MCF 10A (cell line): ENCODE measurements at regions of chr11 and their contacts with region 1.

Region 1: GRCh38 chr11:31870609-31871309 is 59.6 kb upstream of the PAX6 start:
- DNase-seq: peak; percentile 66
- H3K4me3 Mint-ChIP-seq: no peak overlapping the region
- H3K27ac Mint-ChIP-seq: no peak overlapping the region
- H3K4me1 Mint-ChIP-seq: no peaks in the 10 kb centered on the region
- H3K27me3 Mint-ChIP-seq: peaks cover 11% of the 10 kb centered on the region
- CTCF ChIP-seq: peak; percentile 68

Region 2: DNA sequence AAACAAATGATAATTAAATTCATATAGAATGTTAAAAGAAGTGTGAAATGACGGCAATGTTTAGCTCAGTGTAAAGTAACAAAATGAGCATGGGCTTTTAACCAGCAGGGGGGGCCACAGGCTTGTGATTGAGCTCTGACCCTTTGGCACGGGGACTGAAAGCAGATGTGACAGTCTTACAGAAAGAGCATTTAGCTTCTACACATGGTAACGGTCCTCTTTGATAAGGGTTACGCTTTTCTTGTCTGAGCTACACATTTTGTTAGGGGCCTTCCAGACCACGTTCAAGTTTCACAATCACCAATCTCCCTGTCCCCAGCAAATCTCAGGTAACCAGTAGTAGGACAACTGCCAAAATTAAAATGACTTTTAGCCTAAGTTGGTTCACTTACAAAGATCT is 763.7 kb before region 1 on chr11:
- CTCF ChIA-PET with region 1: interaction called, 4 read pairs
- POLR2A ChIA-PET with region 1: interaction called, 3 read pairs
- intact Hi-C with region 1: loop called (anchors 10 kb)
- DNase-seq: peak; percentile 67
- H3K4me3 Mint-ChIP-seq: no peak overlapping the region
- H3K27ac Mint-ChIP-seq: no peak overlapping the region
- H3K4me1 Mint-ChIP-seq: no peaks in the 10 kb centered on the region
- H3K27me3 Mint-ChIP-seq: peaks cover 57% of the 10 kb centered on the region
- CTCF ChIP-seq: peak; percentile 49

Region 3: DNA sequence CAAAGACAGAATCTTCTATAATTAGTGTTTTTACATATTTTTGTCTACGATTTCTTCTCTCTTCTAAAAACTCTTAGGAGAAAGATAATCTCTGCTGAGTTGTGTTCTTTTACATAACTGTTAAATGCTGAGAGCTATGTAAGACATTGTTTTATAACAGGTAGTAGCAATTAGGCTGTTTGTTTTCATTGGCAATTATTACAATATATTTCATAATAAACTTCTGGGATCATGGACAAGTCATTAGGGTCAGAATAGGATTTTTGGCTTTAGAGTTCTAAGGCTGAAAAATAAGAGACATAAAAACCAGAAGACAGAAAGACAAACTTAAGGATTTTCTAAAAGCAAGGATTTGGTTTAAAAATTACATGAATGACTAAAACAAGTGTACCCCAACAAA is 622.0 kb before region 1 on chr11:
- CTCF ChIA-PET with region 1: no interaction called
- POLR2A ChIA-PET with region 1: no interaction called
- intact Hi-C with region 1: no loop called
- DNase-seq: no peak
- H3K4me3 Mint-ChIP-seq: no peak overlapping the region
- H3K27ac Mint-ChIP-seq: no peak overlapping the region
- H3K4me1 Mint-ChIP-seq: no peaks in the 10 kb centered on the region
- H3K27me3 Mint-ChIP-seq: peaks cover 59% of the 10 kb centered on the region
- CTCF ChIP-seq: no peak

Region 4: DNA sequence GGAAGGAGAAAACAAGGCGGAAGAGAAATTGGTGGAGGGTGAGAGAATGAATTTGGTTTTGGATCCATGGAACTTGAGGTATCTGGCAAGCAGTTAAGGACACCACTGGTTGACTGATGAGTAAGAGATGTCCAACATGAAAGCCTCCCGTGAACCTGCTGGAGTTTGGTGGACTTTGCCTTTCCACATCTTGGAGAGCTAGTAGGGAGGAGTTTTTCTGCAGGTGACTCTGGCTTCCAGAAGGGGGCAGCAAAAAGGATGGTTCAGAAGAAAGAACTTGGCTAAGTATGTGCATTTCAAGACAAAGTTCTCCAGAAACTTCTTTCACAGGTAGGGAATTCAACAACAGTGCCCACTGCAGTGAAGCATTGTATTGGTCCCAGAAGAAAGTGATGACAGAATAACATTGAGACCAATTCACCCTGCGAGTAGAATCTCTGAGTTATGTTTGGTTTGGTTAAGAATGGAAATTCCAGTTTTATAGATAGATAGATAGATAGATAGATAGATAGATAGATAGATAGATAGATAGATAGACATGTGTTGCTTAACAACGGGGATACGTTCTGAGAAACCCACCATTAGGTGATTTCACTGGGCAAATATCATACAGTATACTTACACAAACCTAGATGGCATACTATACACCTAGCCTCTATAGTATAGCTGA is 529.7 kb before region 1 on chr11:
- CTCF ChIA-PET with region 1: interaction called, 6 read pairs
- POLR2A ChIA-PET with region 1: no interaction called
- intact Hi-C with region 1: loop called (anchors 1 kb)
- DNase-seq: peak; percentile 52
- H3K4me3 Mint-ChIP-seq: no peak overlapping the region
- H3K27ac Mint-ChIP-seq: no peak overlapping the region
- H3K4me1 Mint-ChIP-seq: no peaks in the 10 kb centered on the region
- H3K27me3 Mint-ChIP-seq: peaks cover 42% of the 10 kb centered on the region
- CTCF ChIP-seq: peak; percentile 47

Region 5: DNA sequence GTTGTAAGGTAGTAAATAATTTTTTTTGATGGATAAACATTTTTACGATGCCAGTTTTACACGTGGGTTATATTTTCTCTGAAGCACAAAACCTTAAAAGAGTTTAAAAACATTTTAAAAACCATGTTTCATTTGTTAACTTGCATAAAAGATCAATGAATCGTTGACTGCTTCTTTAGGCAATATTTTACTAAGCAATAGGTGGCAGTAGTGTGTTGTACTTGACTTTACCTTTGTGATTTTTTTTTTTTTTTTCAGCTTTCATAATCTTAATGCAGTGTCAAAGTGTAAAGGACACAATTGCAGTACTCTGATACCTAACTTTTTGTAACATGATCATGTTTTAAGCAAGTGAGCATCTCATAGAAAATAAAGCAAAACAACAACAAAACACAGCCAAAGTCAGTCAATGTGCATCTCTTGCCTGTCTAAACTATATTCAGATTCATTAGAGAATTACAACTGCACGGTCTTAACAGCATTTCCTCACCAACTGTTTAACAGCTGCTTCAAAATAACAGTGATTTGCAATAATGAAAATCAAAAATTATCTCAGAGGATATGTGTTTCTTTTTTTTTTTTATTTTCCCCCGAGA is 473.4 kb before region 1 on chr11:
- CTCF ChIA-PET with region 1: interaction called, 24 read pairs
- POLR2A ChIA-PET with region 1: interaction called, 6 read pairs
- intact Hi-C with region 1: loop called (anchors 1 kb)
- DNase-seq: peak; percentile 31
- H3K4me3 Mint-ChIP-seq: no peak overlapping the region
- H3K27ac Mint-ChIP-seq: no peak overlapping the region
- H3K4me1 Mint-ChIP-seq: no peaks in the 10 kb centered on the region
- H3K27me3 Mint-ChIP-seq: no peaks in the 10 kb centered on the region
- CTCF ChIP-seq: peak; percentile 54

Region 6: GRCh38 chr11:31487848-31488247 is 382.9 kb before region 1 on chr11:
- CTCF ChIA-PET with region 1: interaction called, 12 read pairs
- POLR2A ChIA-PET with region 1: no interaction called
- intact Hi-C with region 1: loop called (anchors 1 kb)
- DNase-seq: peak; percentile 52
- H3K4me3 Mint-ChIP-seq: no peak overlapping the region
- H3K27ac Mint-ChIP-seq: no peak overlapping the region
- H3K4me1 Mint-ChIP-seq: peaks cover 11% of the 10 kb centered on the region
- H3K27me3 Mint-ChIP-seq: no peaks in the 10 kb centered on the region
- CTCF ChIP-seq: peak; percentile 43

Region 7: DNA sequence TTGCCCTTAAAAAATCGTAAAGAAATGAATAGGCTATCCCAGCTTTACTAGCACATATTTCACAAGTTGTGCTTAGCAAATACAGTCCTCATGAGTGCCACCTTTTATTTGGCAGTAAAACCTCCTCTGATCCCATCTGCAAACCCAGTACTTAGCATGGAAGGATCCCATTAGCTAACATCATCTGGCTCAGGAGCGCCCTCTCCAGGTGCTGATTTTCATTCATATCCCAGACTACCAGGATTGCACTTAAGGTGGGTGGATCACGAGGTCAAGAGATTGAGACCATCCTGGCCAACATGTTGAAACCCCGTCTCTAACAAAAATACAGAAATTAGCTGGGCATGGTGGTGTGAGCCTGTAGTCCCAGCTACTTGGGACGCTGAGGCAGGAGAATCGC is 16.4 kb after region 1 on chr11:
- CTCF ChIA-PET with region 1: interaction called, 14 read pairs
- POLR2A ChIA-PET with region 1: no interaction called
- intact Hi-C with region 1: no loop called
- DNase-seq: peak; percentile 20
- H3K4me3 Mint-ChIP-seq: no peak overlapping the region
- H3K27ac Mint-ChIP-seq: no peak overlapping the region
- H3K4me1 Mint-ChIP-seq: no peaks in the 10 kb centered on the region
- H3K27me3 Mint-ChIP-seq: peaks cover 18% of the 10 kb centered on the region
- CTCF ChIP-seq: no peak

Region 8: GRCh38 chr11:32006799-32007388 is 136.1 kb after region 1 on chr11:
- CTCF ChIA-PET with region 1: interaction called, 7 read pairs
- POLR2A ChIA-PET with region 1: no interaction called
- intact Hi-C with region 1: loop called (anchors 5 kb)
- DNase-seq: peak; percentile 53
- H3K4me3 Mint-ChIP-seq: no peak overlapping the region
- H3K27ac Mint-ChIP-seq: no peak overlapping the region
- H3K4me1 Mint-ChIP-seq: no peaks in the 10 kb centered on the region
- H3K27me3 Mint-ChIP-seq: peaks cover 41% of the 10 kb centered on the region
- CTCF ChIP-seq: peak; percentile 60

Region 9: DNA sequence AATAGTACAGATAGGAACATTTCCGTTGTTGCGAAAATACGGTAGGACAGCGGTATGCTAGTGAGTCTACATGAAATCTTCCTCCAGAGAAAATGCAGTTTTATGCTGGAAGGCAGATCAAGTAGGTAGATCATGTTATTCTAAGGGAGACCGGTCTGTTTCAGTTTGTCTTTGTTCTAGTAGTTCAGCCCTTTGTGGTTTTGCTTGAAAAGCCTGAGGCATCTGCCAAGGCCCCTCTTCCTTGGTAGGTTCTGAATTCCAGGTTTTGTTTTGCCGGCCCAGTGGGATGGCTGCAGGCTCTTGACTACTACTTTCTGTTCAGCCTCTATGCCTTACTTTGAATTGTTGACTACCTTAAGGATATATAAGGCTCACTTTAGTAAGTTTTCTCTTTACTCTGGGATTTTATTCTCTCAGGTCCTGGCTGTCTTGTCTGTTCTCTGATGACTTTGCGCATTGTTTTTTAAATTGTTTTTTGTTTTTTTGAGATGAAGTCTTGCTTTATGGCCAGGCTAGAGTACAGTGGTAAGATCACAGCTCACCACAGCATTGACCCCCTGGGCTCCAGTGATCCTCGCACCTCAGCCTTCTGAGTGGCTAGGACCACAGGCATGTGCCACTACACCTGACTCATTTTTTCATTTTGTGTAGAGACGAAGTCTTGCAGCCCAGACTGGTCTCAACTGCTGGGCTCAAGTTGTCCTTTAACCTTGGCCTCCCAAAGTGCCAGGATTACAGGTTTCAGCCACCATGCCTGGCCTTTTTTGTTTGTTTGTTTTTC is 1440.2 kb after region 1 on chr11:
- CTCF ChIA-PET with region 1: no interaction called
- POLR2A ChIA-PET with region 1: no interaction called
- intact Hi-C with region 1: no loop called
- DNase-seq: peak; percentile 20
- H3K4me3 Mint-ChIP-seq: no peak overlapping the region
- H3K27ac Mint-ChIP-seq: peak overlapping the region; percentile 51
- H3K4me1 Mint-ChIP-seq: peaks cover 18% of the 10 kb centered on the region
- H3K27me3 Mint-ChIP-seq: no peaks in the 10 kb centered on the region
- CTCF ChIP-seq: no peak